PC-9 (cell line): ENCODE measurements at regions of chr3 and their contacts with region 1.

Region 1: DNA sequence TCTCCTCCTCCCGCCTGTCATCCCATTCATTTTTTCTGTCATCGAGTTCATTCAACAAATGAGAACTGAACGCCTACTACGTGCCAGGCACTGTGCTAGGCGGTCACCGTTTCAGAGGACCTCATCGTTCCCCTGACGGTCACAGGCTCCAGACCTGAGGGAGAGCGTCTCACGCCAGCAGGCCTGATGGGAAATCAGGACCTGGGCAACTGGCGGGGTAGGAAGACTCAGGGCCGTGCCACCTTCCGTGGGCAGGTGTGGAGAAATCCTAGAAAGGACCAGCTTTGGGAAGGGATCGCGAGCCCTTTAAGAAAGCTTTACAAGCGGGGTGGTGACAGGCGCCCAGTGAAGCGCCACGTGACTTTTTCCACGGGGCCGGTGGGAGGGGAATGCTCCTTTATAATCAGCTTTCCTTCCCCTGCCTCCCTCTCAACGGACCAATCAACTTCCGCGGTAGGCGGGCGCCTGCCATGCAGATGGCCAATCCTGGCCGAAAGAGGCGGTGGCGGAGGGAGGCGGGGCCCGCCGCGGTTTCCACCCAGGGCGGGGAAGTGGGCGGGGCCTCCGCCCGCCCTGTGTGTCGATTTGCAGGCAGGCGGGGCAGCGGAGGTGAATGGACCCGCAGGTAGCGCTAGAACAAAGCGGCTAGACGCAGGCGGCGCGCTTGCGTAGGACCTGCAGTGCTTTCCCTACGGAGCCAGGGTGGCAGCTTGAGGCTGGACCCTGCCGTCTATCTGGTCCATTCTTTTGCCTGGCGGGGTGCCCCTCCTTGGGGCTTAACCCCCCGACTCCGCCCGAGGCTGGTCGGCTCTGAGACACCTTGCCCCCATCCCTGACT is 816 bp upstream of the DUSP7 start:
- DNase-seq: peak; percentile 93 to 98
- H3K4me3 ChIP-seq: peak overlapping the region; percentile 72
- H3K27ac ChIP-seq: no peak overlapping the region
- H3K4me1 ChIP-seq: peaks cover 6% of the 10 kb centered on the region; the same call in 1 of the 2 replicates
- H3K27me3 ChIP-seq: no peaks in the 10 kb centered on the region
- CTCF ChIP-seq: no peak

Region 2: DNA sequence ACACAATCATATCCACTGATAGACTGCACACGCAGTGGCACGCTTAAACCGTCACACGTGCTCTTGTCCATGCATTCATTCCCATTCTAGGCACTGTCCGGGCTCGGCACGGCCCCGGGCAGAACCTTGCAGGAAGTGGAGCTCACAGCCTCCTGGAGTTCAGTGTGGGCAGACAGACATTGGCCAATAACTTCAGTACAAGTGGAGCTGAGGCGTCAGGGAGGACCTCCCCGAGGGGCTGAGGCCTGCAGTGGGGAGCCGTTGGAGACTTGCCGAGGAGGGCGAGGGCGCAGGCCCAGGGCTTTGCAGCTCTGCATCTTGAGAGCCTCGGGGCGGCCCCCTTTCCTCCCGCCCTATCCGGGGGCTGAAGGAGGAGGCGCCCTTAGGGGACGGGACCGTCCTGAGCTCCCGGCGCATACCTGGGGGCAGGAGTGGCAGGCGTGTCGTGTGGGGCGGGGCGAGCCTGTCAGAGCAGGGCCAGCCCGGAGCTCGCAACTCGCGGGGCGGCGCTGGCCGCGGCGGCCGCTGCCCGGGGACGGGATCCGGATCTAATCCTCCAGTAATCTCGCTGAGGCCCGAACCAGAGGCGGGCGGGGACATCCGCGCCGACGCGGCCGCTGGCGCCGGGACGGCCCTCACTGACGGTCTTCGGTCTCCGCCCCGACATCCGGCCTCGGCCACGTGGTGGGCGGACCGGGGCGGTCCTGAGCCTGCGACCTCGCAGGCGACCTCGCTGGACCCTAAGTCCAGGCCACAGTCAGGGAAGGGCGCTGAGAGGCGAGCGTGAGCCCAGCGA is 74.2 kb before region 1 on chr3 and contains the start of gene ACY1:
- CTCF ChIA-PET with region 1: no interaction called
- POLR2A ChIA-PET with region 1: no interaction called
- intact Hi-C with region 1: no loop called
- DNase-seq: peak; percentile 82 to 95
- H3K4me3 ChIP-seq: peak within 1 kb of the TSS; percentile 67
- H3K27ac ChIP-seq: peak within 1 kb of the TSS; percentile 89
- H3K4me1 ChIP-seq: peaks cover 29% of the 10 kb centered on the region
- H3K27me3 ChIP-seq: no peaks in the 10 kb centered on the region
- CTCF ChIP-seq: peak; percentile 53
- total RNA-seq, gene ACY1: 52.2 and 63.3 TPM in 2 replicates

Region 3: GRCh38 chr3:51995346-51996163 is 61.6 kb before region 1 on chr3 and contains the start of gene RPL29:
- CTCF ChIA-PET with region 1: interaction called, 4 read pairs
- POLR2A ChIA-PET with region 1: interaction called, 4 read pairs
- intact Hi-C with region 1: loop called (anchors 2 kb)
- DNase-seq: peak; percentile 80 to 90
- H3K4me3 ChIP-seq: peak within 1 kb of the TSS; percentile 100
- H3K27ac ChIP-seq: peak within 1 kb of the TSS; percentile 95
- H3K4me1 ChIP-seq: peaks cover 20% of the 10 kb centered on the region
- H3K27me3 ChIP-seq: no peaks in the 10 kb centered on the region
- CTCF ChIP-seq: no peak; the same call in 1 of the 2 replicates
- total RNA-seq, gene RPL29: 942 and 1,278 TPM in 2 replicates

Region 4: DNA sequence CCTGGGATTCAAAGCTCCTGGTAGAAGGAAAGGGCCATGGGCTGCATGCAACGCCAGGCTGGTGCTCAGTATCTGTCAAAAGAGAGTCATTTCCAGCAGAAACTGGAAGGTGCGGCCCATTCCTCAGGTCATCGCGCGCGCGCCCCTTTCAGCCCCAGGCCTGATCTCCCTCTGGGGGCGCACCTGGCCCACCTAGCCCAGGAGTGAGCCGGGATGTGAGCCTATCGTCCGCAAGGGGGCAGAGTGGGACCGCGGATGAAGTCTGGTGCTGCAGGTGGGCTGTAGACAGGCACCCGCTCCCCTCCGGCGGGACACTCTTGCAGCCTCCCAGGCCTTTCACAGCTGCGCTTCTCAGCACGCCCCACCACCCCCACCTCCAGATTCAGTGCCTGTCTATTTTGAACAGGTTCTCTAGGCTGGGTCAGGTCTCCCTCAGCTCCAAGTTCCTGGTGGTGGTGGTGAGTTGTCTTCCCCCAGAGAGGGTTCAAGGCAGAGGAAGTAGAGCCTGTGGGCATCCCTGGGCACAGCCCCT is 55.7 kb before region 1 on chr3:
- CTCF ChIA-PET with region 1: interaction called, 8 read pairs
- POLR2A ChIA-PET with region 1: no interaction called
- intact Hi-C with region 1: loop called (anchors 2 kb)
- DNase-seq: peak in 1 of 2 experiments; percentile 73
- H3K4me3 ChIP-seq: no peak overlapping the region
- H3K27ac ChIP-seq: no peak overlapping the region
- H3K4me1 ChIP-seq: peaks cover 13% of the 10 kb centered on the region
- H3K27me3 ChIP-seq: no peaks in the 10 kb centered on the region
- CTCF ChIP-seq: peak; percentile 92

Region 5: GRCh38 chr3:52099001-52099401 is 41.8 kb after region 1 on chr3:
- CTCF ChIA-PET with region 1: no interaction called
- POLR2A ChIA-PET with region 1: no interaction called
- intact Hi-C with region 1: loop called (anchors 1 kb)
- DNase-seq: peak; percentile 76 to 82
- H3K4me3 ChIP-seq: no peak overlapping the region
- H3K27ac ChIP-seq: no peak overlapping the region
- H3K4me1 ChIP-seq: peaks cover 5% of the 10 kb centered on the region; the same call in 1 of the 2 replicates
- H3K27me3 ChIP-seq: no peaks in the 10 kb centered on the region
- CTCF ChIP-seq: no peak

Region 6: DNA sequence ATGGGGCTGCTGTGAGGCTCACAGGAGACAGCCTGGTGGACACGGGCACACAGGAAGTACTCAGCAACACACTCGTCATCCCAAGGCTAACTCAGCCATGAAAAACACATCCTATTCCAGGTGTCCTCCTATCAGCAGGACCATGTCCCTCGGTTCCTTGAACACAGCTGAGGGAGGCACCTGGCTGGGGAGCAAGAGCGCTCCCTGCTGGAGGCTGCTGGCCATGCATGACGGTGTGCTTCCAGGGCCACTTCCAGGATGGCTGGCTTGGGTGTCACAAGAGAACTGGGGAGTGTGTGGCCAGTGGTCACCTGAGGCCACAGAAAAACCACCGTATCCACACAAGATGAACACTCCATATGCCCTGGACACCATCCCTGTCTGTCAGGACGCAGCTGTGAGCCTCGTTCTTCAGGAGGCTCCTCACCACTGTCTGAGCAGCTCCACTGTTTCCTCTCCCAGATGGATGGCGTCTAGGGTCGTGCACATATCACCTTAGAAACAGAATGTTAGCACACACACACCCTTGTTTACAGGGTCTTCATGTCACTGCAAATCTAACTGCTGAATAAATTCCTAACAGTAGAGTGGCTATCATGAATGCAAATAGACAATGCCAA is 66.0 kb after region 1 on chr3:
- CTCF ChIA-PET with region 1: interaction called, 6 read pairs
- POLR2A ChIA-PET with region 1: no interaction called
- intact Hi-C with region 1: loop called (anchors 1 kb)
- DNase-seq: peak in 1 of 2 experiments; percentile 71
- H3K4me3 ChIP-seq: no peak overlapping the region
- H3K27ac ChIP-seq: no peak overlapping the region
- H3K4me1 ChIP-seq: peaks cover 7% of the 10 kb centered on the region
- H3K27me3 ChIP-seq: no peaks in the 10 kb centered on the region
- CTCF ChIP-seq: peak; percentile 81

Region 7: DNA sequence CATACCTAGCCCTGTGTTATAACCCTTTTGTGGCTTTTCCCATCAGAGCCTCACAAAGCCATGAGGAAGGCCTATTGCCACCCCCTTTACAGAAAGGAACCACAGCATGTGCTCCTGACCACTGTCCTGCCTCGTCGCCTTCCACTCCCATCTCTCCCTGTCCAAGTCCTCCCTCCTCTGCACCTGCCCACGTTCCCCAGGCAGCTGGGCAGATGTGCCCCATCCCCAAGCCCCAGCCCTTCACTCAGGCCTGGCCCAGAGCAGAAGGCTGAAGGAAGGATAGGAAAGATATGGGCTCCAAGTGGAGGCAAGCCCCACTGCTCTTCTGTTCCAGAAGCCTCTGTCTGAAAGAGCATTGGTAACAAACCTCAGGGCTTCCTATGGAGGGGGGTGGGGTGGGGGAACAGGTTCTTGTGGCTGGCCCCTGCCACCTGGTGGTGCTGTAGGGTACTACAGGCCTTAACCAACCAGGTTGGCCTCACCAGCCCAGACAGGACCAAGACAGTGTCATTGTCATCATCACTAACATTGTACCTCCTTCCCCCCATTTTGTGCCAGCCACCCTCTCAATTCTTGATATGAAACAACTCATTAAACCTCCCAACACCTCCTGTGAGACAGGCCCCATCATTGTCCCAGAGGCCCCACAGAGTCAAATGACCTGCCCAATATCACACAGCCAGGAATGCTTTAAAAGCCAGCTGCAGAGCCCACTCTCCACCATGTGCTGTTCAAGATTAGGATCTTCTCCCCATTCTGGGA is 87.0 kb after region 1 on chr3:
- CTCF ChIA-PET with region 1: interaction called, 3 read pairs
- POLR2A ChIA-PET with region 1: interaction called, 4 read pairs
- intact Hi-C with region 1: loop called (anchors 1 kb)
- DNase-seq: peak in 1 of 2 experiments; percentile 73
- H3K4me3 ChIP-seq: no peak overlapping the region
- H3K27ac ChIP-seq: no peak overlapping the region
- H3K4me1 ChIP-seq: no peaks in the 10 kb centered on the region
- H3K27me3 ChIP-seq: no peaks in the 10 kb centered on the region
- CTCF ChIP-seq: peak; percentile 93

Region 8: DNA sequence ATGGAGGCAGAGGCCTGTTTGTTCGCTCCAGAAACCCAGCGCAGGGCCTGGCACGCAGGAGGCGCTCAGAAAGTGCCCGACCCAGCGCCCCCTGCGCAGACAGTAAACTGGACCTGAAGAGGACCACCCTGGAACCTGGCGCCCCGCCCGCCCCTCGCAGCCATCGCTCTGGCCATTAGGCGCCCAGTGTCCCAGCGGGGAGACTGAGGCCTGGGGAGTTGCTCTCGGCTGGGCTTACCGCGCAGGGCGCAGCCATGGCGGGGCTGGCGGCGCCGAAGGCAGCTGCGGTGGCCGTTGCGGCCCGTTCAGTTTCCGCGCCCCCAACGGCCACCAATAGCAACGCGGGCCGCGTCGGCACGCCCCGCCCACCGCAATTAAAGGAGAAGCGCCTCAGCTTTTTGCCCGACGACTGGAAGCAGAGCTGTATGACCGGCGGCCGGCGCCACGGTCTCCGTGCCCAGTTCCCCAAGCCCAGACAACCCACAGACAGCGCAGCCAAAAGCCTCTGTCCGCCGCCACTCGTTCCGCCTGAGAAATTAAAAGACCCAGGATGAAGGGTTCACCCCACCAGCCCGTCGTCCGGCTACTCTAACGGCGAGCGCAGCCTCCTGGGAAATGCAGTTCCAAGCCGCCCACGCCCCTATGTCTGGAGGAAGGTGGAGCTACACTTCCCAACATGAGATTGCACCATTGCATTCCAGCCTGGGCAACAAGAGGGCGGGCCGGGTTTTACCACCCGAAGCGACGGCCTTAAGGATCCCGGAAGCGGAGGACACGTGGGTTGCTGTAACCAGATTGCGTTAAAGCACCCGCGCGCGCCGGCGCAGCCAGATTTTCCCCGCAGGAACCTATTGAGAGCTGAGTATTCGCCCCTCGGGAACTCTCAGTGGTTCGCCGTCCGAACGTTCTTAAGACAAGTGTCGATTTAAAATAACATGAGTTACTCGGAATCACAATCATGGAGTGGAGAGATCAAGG is 97.2 kb after region 1 on chr3 and contains the start of gene POC1A:
- CTCF ChIA-PET with region 1: no interaction called
- POLR2A ChIA-PET with region 1: no interaction called
- intact Hi-C with region 1: no loop called
- DNase-seq: peak; percentile 93
- H3K4me3 ChIP-seq: peak within 1 kb of the TSS; percentile 90
- H3K27ac ChIP-seq: peak within 1 kb of the TSS; percentile 68
- H3K4me1 ChIP-seq: peaks cover 16% of the 10 kb centered on the region
- H3K27me3 ChIP-seq: no peaks in the 10 kb centered on the region
- CTCF ChIP-seq: no peak; the same call in 1 of the 2 replicates
- total RNA-seq, gene POC1A: 28.8 and 35.0 TPM in 2 replicates

Region 9: GRCh38 chr3:52250122-52250521 is 192.9 kb after region 1 on chr3:
- CTCF ChIA-PET with region 1: interaction called, 7 read pairs
- POLR2A ChIA-PET with region 1: interaction called, 20 read pairs
- intact Hi-C with region 1: no loop called
- DNase-seq: no peak
- H3K4me3 ChIP-seq: no peak overlapping the region
- H3K27ac ChIP-seq: no peak overlapping the region
- H3K4me1 ChIP-seq: peaks cover 3% of the 10 kb centered on the region
- H3K27me3 ChIP-seq: no peaks in the 10 kb centered on the region
- CTCF ChIP-seq: no peak